Astrocyte of the cerebellum (primary cell): ENCODE measurements at regions of chr10 and their contacts with region 1.

Region 1: GRCh38 chr10:84264611-84265141 is 19.8 kb downstream of the RGR start:
- DNase-seq: peak; percentile 36
- H3K4me3 ChIP-seq: no peak overlapping the region
- CTCF ChIP-seq: peak; percentile 93

Region 2: GRCh38 chr10:84499846-84500245 is 235.2 kb after region 1 on chr10:
- in situ Hi-C with region 1: loop called (anchors 25 kb)
- DNase-seq: no peak
- H3K4me3 ChIP-seq: no peak overlapping the region
- CTCF ChIP-seq: no peak